ENCODE measurements at regions of chr11 and their contacts with region 1.

Region 1: DNA sequence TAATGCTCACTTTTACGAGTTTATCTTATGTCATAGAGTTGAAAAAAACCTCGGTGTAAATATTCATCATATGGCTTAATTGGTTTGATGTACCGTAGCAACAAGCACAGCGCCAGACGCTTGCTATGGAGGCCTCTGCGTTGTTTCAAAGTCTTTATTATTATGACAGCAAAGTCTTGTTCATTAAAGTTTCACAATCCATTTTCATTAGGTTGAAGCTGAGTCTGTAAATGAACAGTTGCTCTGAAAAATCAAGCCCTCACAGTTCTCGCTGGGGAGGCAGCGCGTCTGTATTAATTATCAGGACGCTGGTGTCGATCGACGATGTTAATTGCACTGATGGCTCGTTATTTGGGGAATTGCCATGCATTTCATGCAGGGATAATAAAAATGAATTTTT is 185.6 kb downstream of the INSC start:
- DNase-seq: no peak
- ATAC-seq: no peak
- H3K4me3 ChIP-seq: no peak overlapping the region
- H3K27ac ChIP-seq: no peak overlapping the region
- H3K4me1 ChIP-seq: no peaks in the 10 kb centered on the region
- H3K27me3 ChIP-seq: no peaks in the 10 kb centered on the region
- CTCF ChIP-seq: no peak
- EP300 ChIP-seq: no peak
- POLR2A ChIP-seq: no peak
- RAD21 ChIP-seq: no peak

Region 2: DNA sequence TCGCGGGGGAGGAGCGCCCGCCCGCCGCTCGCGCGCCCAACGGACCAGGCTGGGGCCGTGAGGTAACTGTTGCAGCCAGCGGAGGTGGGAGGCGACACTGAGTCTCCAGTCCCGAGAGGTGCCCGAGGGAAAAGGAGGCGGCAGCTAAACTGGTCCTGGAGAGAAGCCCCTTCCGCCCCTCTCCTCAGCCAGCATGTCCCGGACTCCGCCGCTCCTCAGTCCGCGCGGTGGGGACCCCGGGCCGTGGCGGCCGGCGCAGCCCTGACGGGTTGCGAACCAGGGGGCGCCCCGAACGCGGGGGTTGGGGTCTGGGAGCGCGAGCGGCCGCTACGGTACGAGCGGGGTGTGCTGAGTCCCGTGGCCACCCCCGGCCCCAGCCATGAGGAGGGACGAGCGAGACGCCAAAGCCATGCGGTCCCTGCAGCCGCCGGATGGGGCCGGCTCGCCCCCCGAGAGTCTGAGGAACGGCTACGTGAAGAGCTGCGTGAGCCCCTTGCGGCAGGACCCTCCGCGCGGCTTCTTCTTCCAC is 656.6 kb before region 1 on chr11 and contains the start of gene PDE3B:
- CTCF ChIA-PET with region 1: no interaction called
- POLR2A ChIA-PET with region 1: no interaction called
- RAD21 ChIA-PET with region 1: no interaction called
- SMC1A ChIA-PET with region 1: no interaction called
- in situ Hi-C with region 1: no loop called
- intact Hi-C with region 1: loop called (anchors 5 kb)
- DNase-seq: no peak
- ATAC-seq: peak; percentile 56
- H3K4me3 ChIP-seq: peak within 1 kb of the TSS; percentile 61
- H3K27ac ChIP-seq: no peak within 1 kb of the TSS
- H3K4me1 ChIP-seq: no peaks in the 10 kb centered on the region
- H3K27me3 ChIP-seq: peaks cover 0 to 6% of the 10 kb centered on the region in 2 experiments; a peak in 3 of 4 replicates
- CTCF ChIP-seq: no peak
- EP300 ChIP-seq: no peak
- POLR2A ChIP-seq: peak; percentile 65
- RAD21 ChIP-seq: no peak
- polyA plus RNA-seq, gene PDE3B: 0.40 to 0.77 TPM

Measured in GM12878 (cell line).